Activated CD8-positive, alpha-beta T cell treated with anti-CD3 and anti-CD28 coated beads for 36 hours (primary cell): ENCODE measurements at regions of chr16 and their contacts with region 1.

Region 1: DNA sequence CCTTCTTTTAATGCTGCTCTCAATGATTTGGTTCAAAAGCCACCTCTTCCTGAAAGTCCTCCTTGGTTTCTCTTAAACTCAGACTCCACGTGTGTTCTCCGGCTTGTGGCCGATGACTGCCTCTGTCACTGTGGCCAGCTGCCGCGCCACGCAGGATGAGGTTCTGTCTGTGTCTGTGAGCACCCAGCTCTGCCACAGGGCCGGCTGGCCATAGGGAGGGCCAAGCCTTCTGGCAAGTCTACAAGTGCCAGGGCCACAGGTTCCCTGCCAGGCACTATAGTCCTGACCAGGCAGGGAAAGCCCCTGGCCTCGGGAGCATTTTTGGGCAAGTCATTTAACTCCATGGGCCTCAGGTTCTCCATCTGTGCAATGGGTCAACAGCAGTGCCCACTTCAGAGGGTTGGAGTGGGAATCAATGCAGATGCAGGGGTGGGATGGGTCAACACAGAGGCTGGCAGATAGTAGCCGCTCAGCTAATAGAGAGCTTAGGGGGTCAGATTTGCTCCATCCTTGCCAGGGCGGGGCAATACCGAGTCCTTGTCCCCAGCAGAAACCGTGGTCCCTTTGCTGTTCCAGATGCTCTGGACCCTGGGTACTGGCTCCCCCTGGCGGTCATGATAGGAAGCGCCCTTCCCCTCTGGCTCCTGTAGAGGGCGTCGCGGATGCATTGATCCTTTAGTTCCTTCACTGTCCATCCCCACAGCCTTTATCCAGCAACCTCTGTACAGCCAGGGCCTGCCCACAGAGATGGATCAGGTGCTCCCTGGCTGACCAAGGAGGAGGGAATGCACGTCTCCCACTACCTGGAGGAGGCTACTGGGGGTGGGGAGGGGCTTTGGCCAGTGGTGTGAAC is 19.3 kb upstream of the ADGRG3 start:
- DNase-seq: peak; percentile 94
- ATAC-seq: peak; percentile 73
- H3K4me3 Mint-ChIP-seq: no peak overlapping the region
- H3K27ac Mint-ChIP-seq: peak overlapping the region; percentile 86
- H3K4me1 Mint-ChIP-seq: peaks cover 33% of the 10 kb centered on the region
- H3K27me3 Mint-ChIP-seq: no peaks in the 10 kb centered on the region
- CTCF ChIP-seq: peak; percentile 100

Region 2: DNA sequence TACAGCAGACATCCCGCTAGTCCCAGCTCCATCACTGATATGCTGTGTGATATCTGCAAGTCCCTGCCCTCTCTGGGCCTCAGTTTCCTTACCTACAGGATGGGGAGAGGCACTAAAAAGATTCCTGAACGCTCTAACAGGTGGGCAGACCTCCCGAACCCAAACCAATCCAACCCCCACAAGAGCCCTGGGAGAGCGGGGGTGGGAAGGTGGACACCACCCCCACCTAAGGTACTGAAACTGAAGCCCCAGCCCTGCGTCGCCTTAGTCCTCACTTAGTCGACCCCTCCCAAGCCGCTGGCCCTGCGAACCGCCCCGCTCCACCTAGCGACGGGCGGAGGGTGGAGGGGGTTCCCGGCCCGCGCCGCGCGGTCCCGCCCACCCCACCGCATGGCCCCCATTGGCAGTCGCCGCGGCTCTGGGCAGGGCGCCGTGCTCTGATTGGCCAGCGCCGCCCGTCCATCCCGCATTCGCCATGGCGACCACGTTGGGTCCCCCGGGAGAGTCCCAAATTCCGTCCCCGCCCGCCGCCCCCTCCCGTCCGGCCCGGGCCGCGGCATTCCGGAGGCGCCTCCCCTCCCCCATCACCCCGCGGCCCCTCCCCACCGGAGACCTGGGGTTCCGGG is 113.0 kb before region 1 on chr16:
- CTCF ChIA-PET with region 1: interaction called, 10 read pairs
- POLR2A ChIA-PET with region 1: interaction called, 3 read pairs
- intact Hi-C with region 1: no loop called
- DNase-seq: peak; percentile 95
- ATAC-seq: peak; percentile 78
- H3K4me3 Mint-ChIP-seq: peak overlapping the region; percentile 81
- H3K27ac Mint-ChIP-seq: peak overlapping the region; percentile 92
- H3K4me1 Mint-ChIP-seq: peaks cover 73% of the 10 kb centered on the region
- H3K27me3 Mint-ChIP-seq: no peaks in the 10 kb centered on the region
- CTCF ChIP-seq: no peak

Region 3: DNA sequence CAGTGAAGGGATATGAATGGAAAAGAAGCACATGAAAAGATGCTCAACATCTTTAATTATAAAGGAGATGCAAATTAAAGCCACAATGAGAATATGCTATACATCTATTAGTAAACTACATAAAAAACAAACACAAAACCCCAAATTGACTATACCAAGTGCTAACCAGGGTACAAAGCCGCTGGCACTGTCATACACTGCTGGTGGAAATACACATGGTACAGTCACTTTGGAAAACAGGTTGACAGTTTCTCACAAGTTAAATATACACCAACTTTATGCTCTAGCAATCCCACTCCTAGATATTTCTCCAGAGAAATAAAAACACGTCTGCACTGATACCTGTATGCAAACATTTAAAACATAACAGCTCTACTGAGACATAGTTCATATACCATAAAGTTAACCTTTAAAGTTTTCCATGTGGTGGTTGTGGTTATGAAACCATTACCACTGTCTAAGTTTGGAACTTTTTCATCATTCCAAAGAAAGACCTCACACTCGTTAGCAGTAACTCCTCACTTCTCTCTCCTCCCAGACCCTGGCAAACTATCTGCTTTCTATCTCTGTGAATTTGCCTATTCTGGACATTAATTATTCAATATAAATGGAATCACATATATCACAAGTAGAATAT is 63.6 kb before region 1 on chr16:
- CTCF ChIA-PET with region 1: interaction called, 265 read pairs
- POLR2A ChIA-PET with region 1: interaction called, 44 read pairs
- intact Hi-C with region 1: loop called (anchors 5 kb)
- DNase-seq: no peak
- ATAC-seq: peak; percentile 31
- H3K4me3 Mint-ChIP-seq: no peak overlapping the region
- H3K27ac Mint-ChIP-seq: peak overlapping the region; percentile 58
- H3K4me1 Mint-ChIP-seq: peaks cover 32% of the 10 kb centered on the region
- H3K27me3 Mint-ChIP-seq: no peaks in the 10 kb centered on the region
- CTCF ChIP-seq: no peak

Region 4: GRCh38 chr16:57600048-57600835 is 48.6 kb before region 1 on chr16:
- CTCF ChIA-PET with region 1: interaction called, 127 read pairs
- POLR2A ChIA-PET with region 1: interaction called, 9 read pairs
- intact Hi-C with region 1: no loop called
- DNase-seq: peak; percentile 61
- ATAC-seq: peak; percentile 19
- H3K4me3 Mint-ChIP-seq: no peak overlapping the region
- H3K27ac Mint-ChIP-seq: peak overlapping the region; percentile 71
- H3K4me1 Mint-ChIP-seq: peaks cover 57% of the 10 kb centered on the region
- H3K27me3 Mint-ChIP-seq: no peaks in the 10 kb centered on the region
- CTCF ChIP-seq: peak; percentile 81

Region 5: GRCh38 chr16:57618306-57619127 is 30.3 kb before region 1 on chr16:
- CTCF ChIA-PET with region 1: interaction called, 10 read pairs
- POLR2A ChIA-PET with region 1: interaction called, 5 read pairs
- intact Hi-C with region 1: no loop called
- DNase-seq: no peak
- ATAC-seq: no peak
- H3K4me3 Mint-ChIP-seq: no peak overlapping the region
- H3K27ac Mint-ChIP-seq: peak overlapping the region; percentile 77
- H3K4me1 Mint-ChIP-seq: peaks cover 33% of the 10 kb centered on the region
- H3K27me3 Mint-ChIP-seq: no peaks in the 10 kb centered on the region
- CTCF ChIP-seq: no peak

Region 6: DNA sequence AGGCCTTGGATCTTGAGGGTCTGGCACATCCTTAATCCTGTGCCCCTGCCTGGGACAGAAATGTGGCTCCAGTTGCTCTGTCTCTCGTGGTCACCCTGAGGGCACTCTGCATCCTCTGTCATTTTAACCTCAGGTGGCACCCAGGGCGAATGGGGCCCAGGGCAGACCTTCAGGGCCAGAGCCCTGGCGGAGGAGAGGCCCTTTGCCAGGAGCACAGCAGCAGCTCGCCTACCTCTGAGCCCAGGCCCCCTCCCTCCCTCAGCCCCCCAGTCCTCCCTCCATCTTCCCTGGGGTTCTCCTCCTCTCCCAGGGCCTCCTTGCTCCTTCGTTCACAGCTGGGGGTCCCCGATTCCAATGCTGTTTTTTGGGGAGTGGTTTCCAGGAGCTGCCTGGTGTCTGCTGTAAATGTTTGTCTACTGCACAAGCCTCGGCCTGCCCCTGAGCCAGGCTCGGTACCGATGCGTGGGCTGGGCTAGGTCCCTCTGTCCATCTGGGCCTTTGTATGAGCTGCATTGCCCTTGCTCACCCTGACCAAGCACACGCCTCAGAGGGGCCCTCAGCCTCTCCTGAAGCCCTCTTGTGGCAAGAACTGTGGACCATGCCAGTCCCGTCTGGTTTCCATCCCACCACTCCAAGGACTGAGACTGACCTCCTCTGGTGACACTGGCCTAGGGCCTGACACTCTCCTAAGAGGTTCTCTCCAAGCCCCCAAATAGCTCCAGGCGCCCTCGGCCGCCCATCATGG is 15.3 kb after region 1 on chr16:
- CTCF ChIA-PET with region 1: interaction called, 14 read pairs
- POLR2A ChIA-PET with region 1: no interaction called
- intact Hi-C with region 1: no loop called
- DNase-seq: no peak
- ATAC-seq: no peak
- H3K4me3 Mint-ChIP-seq: no peak overlapping the region
- H3K27ac Mint-ChIP-seq: no peak overlapping the region
- H3K4me1 Mint-ChIP-seq: no peaks in the 10 kb centered on the region
- H3K27me3 Mint-ChIP-seq: no peaks in the 10 kb centered on the region
- CTCF ChIP-seq: no peak